ENCODE measurements at regions of chr2 and their contacts with region 1.

Region 1: GRCh38 chr2:70124983-70125480 is 37.8 kb downstream of the PCBP1 start:
- DNase-seq: peak; percentile 69
- ATAC-seq: peak; percentile 70
- H3K4me3 Mint-ChIP-seq: peak overlapping the region; percentile 90
- H3K27ac Mint-ChIP-seq: peak overlapping the region; percentile 99
- H3K4me1 Mint-ChIP-seq: peaks cover 78% of the 10 kb centered on the region
- H3K27me3 Mint-ChIP-seq: no peaks in the 10 kb centered on the region

Region 2: DNA sequence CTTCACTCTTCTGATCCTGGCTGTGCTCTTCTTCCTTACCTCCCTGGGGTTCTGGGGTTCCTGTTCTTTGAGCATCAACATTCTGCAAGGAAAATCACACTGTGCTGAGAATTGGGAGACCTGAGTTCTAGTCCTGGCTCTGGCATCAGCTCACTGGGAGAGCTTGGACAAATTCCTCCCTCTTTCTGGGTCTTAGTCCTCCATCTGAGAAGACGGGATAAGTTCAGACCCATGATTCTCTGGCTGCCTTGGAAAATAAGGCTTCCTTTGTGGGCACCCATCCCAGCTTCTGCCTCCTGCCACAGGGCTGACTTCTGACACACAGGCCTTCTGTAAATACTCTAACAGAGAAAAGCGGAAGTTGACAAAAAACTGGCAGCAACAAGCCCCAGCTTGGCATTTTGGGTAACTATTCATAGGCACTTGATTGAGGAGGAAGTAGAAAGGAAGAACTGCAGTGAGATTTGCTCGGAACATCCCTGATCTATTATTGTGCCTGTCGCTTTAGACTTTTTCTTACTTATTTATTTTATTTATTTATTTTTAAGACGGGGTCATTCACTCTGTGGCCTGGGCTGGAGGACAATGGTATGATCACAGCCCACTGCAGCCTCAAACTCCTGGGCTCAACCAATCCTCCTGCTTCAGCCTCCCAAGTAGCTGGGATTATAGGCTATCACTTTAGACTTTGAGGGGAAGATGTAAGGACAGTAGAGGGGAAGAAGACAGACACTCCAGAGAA is 29.9 kb before region 1 on chr2:
- CTCF ChIA-PET with region 1: interaction called, 5 read pairs
- POLR2A ChIA-PET with region 1: interaction called, 84 read pairs
- DNase-seq: peak; percentile 74
- ATAC-seq: peak; percentile 72
- H3K4me3 Mint-ChIP-seq: peak overlapping the region; percentile 70
- H3K27ac Mint-ChIP-seq: peak overlapping the region; percentile 84
- H3K4me1 Mint-ChIP-seq: peaks cover 56% of the 10 kb centered on the region
- H3K27me3 Mint-ChIP-seq: no peaks in the 10 kb centered on the region

Region 3: DNA sequence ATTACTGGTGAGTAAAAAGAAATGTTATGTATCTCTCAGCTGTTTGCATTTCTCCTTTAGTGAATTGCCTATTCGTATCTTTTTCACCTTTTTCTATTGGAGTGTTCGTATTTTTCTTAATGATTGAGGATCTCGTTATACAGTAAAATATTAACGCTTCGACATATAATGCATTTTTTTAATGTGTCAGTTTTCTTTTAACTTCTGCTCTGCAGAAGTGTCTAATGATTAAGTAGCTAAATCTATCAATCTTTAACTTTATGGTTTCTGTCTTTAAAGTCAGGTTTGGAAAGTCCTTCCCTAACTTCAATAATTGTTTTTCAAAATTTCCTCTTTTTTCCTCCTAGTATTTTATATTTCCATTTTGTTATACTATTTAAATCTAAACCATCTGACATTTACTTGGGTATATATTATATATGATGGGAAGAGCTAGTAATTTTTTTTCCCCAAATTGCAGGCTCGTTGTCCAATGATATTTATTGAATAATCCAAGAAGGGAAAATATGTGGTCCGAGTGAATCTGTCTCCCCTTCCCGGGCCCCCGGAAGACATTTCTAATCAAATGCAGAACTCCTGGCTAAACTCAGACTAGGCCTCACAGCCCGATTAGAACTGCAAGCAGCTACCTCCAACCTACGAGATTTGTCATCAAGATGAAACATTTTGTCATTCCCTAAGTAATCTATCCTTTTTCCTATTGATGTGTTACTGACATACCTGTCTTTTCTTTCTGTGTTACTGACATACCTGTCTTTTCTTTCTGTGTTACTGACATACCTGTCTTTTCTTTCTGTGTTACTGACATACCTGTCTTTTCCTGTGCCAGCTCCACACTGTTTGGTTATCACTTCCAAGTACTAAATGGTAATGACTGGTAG is 20.6 kb before region 1 on chr2:
- CTCF ChIA-PET with region 1: interaction called, 18 read pairs
- POLR2A ChIA-PET with region 1: interaction called, 29 read pairs
- DNase-seq: peak; percentile 64
- ATAC-seq: no peak
- H3K4me3 Mint-ChIP-seq: peak overlapping the region; percentile 77
- H3K27ac Mint-ChIP-seq: peak overlapping the region; percentile 95
- H3K4me1 Mint-ChIP-seq: peaks cover 62% of the 10 kb centered on the region
- H3K27me3 Mint-ChIP-seq: no peaks in the 10 kb centered on the region

Region 4: GRCh38 chr2:70137519-70137918 is 12.5 kb after region 1 on chr2:
- CTCF ChIA-PET with region 1: interaction called, 23 read pairs
- POLR2A ChIA-PET with region 1: interaction called, 48 read pairs
- DNase-seq: peak; percentile 63
- ATAC-seq: peak; percentile 7
- H3K4me3 Mint-ChIP-seq: peak overlapping the region; percentile 32
- H3K27ac Mint-ChIP-seq: peak overlapping the region; percentile 98
- H3K4me1 Mint-ChIP-seq: peaks cover 84% of the 10 kb centered on the region
- H3K27me3 Mint-ChIP-seq: no peaks in the 10 kb centered on the region